ENCODE measurements at regions of chr19 and their contacts with region 1.

Region 1: GRCh38 chr19:10269333-10270179 is 1.4 kb upstream of the ICAM1 start:
- DNase-seq: peak; percentile 86
- CTCF ChIP-seq: peak; percentile 95

Region 2: GRCh38 chr19:10152100-10152499 is 117.5 kb before region 1 on chr19:
- in situ Hi-C with region 1: no loop called
- DNase-seq: no peak
- CTCF ChIP-seq: no peak

Region 3: GRCh38 chr19:10388957-10389356 is 119.4 kb after region 1 on chr19:
- in situ Hi-C with region 1: loop called (anchors 5 kb)
- DNase-seq: peak; percentile 70
- CTCF ChIP-seq: peak; percentile 68

Measured in GM13976 (cell line).